ENCODE measurements at regions of chr10 and their contacts with region 1.

Region 1: DNA sequence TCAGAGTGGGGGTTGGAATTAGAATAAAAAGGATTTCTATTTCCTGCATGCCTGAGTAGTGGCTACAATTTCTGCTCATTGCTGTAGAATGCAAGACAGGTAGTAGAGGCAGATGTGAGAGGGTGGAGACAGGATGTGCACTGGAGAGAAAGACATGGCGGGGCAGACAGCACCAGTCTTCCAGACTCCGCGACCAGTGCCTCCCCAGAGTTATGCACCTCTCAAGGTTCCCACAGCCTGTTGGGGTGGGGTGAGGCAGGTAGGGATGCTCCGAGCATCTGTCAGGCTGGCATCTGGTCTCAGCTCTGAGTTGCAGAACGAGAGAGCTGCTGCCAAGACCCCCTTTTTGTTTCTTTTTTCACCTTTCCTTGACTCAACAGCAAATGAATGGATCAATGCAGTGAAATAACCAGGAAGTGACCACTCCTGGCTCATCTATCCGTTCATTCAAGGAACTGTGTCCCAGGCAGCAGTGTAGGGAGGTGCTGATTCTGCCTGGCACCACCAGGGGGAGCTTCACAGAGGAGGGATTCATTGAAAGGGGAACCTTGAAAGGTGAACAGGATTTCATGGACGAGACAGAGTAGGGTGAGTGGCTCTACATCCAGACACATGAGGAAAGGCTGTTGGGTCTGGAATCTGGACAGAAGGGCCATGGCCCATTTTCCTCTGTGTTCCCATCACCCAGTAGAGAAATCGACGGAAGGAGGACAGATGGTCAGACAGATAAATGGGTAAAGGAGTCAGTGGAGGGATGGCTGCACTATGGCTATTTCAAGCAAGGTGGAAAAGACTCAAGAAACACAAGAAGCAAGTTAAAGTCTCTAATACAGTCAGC is 17.2 kb upstream of the SLC18A3 start:
- DNase-seq: peak in 4 of 5 donors; percentile 17 to 27 (median 21)
- H3K4me3 ChIP-seq: no peak overlapping the region
- H3K4me3 Mint-ChIP-seq: no peak overlapping the region
- H3K27ac ChIP-seq: no peak overlapping the region
- H3K27ac Mint-ChIP-seq: no peak overlapping the region
- H3K4me1 ChIP-seq: no peaks in the 10 kb centered on the region
- H3K4me1 Mint-ChIP-seq: peaks cover 0 to 6% (median 2%) of the 10 kb centered on the region in 4 donors
- H3K27me3 ChIP-seq: no peaks in the 10 kb centered on the region
- H3K27me3 Mint-ChIP-seq: peaks cover 11 to 18% of the 10 kb centered on the region in 2 donors

Region 2: DNA sequence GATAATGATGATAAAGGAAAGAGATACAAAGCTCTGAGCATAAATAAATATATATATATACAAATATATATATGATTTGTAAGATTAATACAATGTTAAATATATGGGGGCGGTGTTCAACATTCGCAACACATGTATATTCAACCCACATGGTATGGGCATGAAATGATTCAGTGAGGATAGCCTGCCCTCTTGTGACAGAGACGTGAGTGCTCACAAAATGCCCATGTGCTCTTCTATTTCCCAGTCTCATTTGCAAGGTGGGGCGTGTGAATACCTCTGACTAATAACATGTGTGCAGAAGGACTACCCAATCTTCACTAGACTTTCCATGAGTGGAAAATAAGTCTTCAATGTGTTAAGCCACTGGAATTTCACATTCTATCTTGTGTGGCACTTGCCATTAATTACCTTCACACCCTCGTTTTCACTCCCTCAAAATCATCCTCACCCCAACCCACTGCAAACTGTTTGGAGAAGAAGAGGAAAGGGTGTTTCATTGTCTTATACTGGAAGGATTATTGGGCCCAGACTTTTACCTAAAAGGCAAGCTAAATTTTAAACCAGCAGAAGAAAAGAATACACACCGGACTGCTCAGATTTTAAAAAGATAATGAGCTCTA is 631.5 kb after region 1 on chr10:
- CTCF ChIA-PET with region 1: interaction called, 10 read pairs
- POLR2A ChIA-PET with region 1: no interaction called
- intact Hi-C with region 1: no loop called
- DNase-seq: peak in 4 of 5 donors; percentile 4 to 25 (median 10)
- H3K4me3 ChIP-seq: no peak overlapping the region
- H3K4me3 Mint-ChIP-seq: no peak overlapping the region
- H3K27ac ChIP-seq: no peak overlapping the region
- H3K27ac Mint-ChIP-seq: no peak overlapping the region
- H3K4me1 ChIP-seq: no peaks in the 10 kb centered on the region
- H3K4me1 Mint-ChIP-seq: no peaks in the 10 kb centered on the region
- H3K27me3 ChIP-seq: no peaks in the 10 kb centered on the region
- H3K27me3 Mint-ChIP-seq: peaks cover 13 to 15% of the 10 kb centered on the region in 2 donors

Region 3: GRCh38 chr10:50275650-50276235 is 682.8 kb after region 1 on chr10:
- CTCF ChIA-PET with region 1: no interaction called
- POLR2A ChIA-PET with region 1: no interaction called
- intact Hi-C with region 1: loop called (anchors 5 kb)
- DNase-seq: peak in 2 of 5 donors; percentile 7 to 8
- H3K4me3 ChIP-seq: no peak overlapping the region
- H3K4me3 Mint-ChIP-seq: no peak overlapping the region
- H3K27ac ChIP-seq: no peak overlapping the region
- H3K27ac Mint-ChIP-seq: no peak overlapping the region
- H3K4me1 ChIP-seq: no peaks in the 10 kb centered on the region
- H3K4me1 Mint-ChIP-seq: peaks cover 0 to 1% (median 0%) of the 10 kb centered on the region in 4 donors
- H3K27me3 ChIP-seq: no peaks in the 10 kb centered on the region
- H3K27me3 Mint-ChIP-seq: peaks cover 12 to 21% of the 10 kb centered on the region in 2 donors